ENCODE measurements at regions of chr7 and their contacts with region 1.

Region 1: GRCh38 chr7:139680676-139681462 is 96.9 kb downstream of the HIPK2 start:
- DNase-seq: peak; percentile 88
- H3K4me3 Mint-ChIP-seq: peak overlapping the region; percentile 67
- H3K27ac Mint-ChIP-seq: peak overlapping the region; percentile 91
- H3K4me1 Mint-ChIP-seq: peaks cover 48% of the 10 kb centered on the region
- H3K27me3 Mint-ChIP-seq: no peaks in the 10 kb centered on the region

Region 2: GRCh38 chr7:138797841-138798271 is 883.0 kb before region 1 on chr7 and contains the starts of genes ATP6V0A4 and TMEM213:
- intact Hi-C with region 1: no loop called
- DNase-seq: no peak
- H3K4me3 Mint-ChIP-seq: no peak within 1 kb of the TSS
- H3K27ac Mint-ChIP-seq: peak within 1 kb of the TSS; percentile 6
- H3K4me1 Mint-ChIP-seq: peaks cover 12% of the 10 kb centered on the region
- H3K27me3 Mint-ChIP-seq: peaks cover 8% of the 10 kb centered on the region
- total RNA-seq, gene ATP6V0A4: not detected in 2 replicates
- total RNA-seq, gene TMEM213: 0.09 TPM in 1 of 2 replicates, not detected in the other

Region 3: GRCh38 chr7:139645572-139646523 is 35.0 kb before region 1 on chr7:
- intact Hi-C with region 1: loop called (anchors 2 kb)
- DNase-seq: peak; percentile 94
- H3K4me3 Mint-ChIP-seq: no peak overlapping the region
- H3K27ac Mint-ChIP-seq: no peak overlapping the region
- H3K4me1 Mint-ChIP-seq: peaks cover 51% of the 10 kb centered on the region
- H3K27me3 Mint-ChIP-seq: no peaks in the 10 kb centered on the region

Region 4: GRCh38 chr7:139699640-139700504 is 19.0 kb after region 1 on chr7:
- intact Hi-C with region 1: loop called (anchors 1 kb)
- DNase-seq: peak; percentile 68
- H3K4me3 Mint-ChIP-seq: no peak overlapping the region
- H3K27ac Mint-ChIP-seq: peak overlapping the region; percentile 85
- H3K4me1 Mint-ChIP-seq: peaks cover 36% of the 10 kb centered on the region
- H3K27me3 Mint-ChIP-seq: no peaks in the 10 kb centered on the region

Region 5: DNA sequence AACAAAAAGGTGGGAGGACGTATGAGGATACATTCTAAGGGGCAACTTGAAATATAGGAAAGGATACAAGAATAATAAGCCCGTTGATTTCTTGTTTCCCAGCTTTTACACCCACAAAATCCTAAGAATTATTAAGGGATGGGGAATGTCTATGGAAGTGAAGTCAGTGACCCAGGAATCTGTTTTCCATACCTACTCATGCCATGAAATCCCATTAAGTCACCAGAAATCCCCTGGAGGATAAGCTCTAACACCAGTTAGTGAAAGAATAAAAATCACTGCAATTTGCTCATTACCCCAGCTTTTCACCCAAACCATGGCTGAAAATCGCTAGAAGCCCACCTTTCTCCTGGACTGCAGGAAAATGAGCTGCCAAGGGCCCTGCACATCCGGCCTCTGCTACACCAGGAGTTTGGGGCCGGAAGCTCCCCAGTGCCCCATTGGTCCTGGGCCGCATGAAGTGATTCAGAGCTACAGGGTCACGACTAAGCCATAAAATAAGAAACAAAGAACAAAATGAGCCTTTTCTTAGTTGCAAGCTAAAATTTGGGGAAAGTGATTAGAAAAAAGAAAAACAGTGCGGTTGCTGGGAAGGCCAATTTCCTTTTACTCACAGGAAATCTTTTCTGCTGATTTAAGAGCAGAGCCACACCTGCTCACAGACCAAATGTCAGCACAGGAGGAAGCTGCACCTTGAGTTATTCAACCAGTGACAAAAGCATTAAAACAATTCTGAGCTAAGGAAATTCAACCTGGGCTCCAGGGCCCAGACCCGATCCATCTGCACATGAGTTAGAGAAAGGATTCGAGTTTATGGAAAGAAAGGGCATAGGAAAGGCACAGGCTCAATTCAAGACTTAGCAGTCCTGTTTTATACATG is 56.6 kb after region 1 on chr7:
- intact Hi-C with region 1: loop called (anchors 5 kb)
- DNase-seq: peak; percentile 69
- H3K4me3 Mint-ChIP-seq: peak overlapping the region; percentile 48
- H3K27ac Mint-ChIP-seq: peak overlapping the region; percentile 75
- H3K4me1 Mint-ChIP-seq: peaks cover 38% of the 10 kb centered on the region
- H3K27me3 Mint-ChIP-seq: no peaks in the 10 kb centered on the region

Region 6: GRCh38 chr7:139771001-139771970 is 90.4 kb after region 1 on chr7:
- intact Hi-C with region 1: loop called (anchors 1 kb)
- DNase-seq: no peak
- H3K4me3 Mint-ChIP-seq: no peak overlapping the region
- H3K27ac Mint-ChIP-seq: peak overlapping the region; percentile 42
- H3K4me1 Mint-ChIP-seq: peaks cover 78% of the 10 kb centered on the region
- H3K27me3 Mint-ChIP-seq: no peaks in the 10 kb centered on the region

Measured in activated CD4-positive, alpha-beta T cell treated with anti-CD3 and anti-CD28 coated beads, Interleukin-2, amount 10 ng/mL, durations not matched to agents 24 days and 14 days (primary cell).